ENCODE measurements at regions of chr1 and their contacts with region 1.

Region 1: GRCh38 chr1:33055210-33056008 is 18.7 kb upstream of the AK2 start:
- DNase-seq: peak; percentile 60 to 85
- H3K4me3 ChIP-seq: no peak overlapping the region; the same call in 1 of the 2 replicates
- H3K27ac ChIP-seq: peak overlapping the region; percentile 60
- H3K4me1 ChIP-seq: peaks cover 29% of the 10 kb centered on the region
- H3K27me3 ChIP-seq: no peaks in the 10 kb centered on the region
- CTCF ChIP-seq: peak; percentile 85

Region 2: DNA sequence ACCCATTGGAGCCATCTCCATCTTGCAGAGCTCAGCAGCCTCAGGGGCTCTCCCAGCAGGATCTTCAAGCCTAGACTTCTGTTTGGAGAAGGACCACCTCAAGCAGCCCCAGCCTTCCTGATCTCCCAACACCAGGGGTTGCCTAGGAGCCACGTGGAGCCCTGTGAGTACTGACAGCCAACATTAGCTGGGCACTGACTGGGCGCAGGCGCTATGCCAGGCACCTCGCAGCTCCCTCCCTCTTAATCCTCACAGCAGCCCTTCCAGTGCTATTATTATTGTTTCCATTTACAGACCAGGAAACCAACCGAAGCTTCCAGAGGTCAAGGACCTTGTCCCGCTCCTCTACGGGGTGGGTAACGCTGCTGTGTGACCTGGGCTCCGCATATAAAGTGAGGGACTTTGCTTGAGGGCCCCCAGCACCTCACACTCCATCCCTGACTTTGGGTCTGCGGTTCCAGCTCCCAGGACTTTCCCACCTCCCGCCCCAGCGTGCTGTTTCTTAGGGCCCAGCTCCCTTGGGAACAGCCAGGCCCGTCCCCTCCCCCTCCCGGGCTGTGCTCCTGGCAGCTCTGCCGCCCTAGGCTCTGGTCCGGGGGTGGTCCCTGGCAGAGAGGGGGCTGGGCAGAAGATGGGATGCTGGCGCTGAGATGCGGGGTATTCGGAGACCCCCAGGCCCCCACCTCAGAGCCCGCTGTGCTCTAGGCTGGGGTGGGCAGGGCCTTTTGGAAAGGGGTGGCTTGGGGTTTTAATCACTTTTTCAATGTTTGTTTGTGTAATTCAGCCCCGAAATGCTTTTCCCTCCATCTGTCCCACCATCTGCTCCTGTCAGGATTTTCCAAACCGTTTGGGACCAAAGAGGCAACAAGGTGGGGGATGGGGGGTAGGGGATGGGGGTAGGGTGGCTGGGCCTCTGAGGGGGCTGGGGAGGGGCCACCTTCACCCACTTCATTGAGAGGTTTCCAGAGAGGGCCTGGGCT is 173.2 kb before region 1 on chr1:
- CTCF ChIA-PET with region 1: interaction called, 3 read pairs
- POLR2A ChIA-PET with region 1: no interaction called
- intact Hi-C with region 1: loop called (anchors 1 kb)
- DNase-seq: no peak
- H3K4me3 ChIP-seq: no peak overlapping the region
- H3K27ac ChIP-seq: no peak overlapping the region
- H3K4me1 ChIP-seq: no peaks in the 10 kb centered on the region
- H3K27me3 ChIP-seq: peaks cover 6% of the 10 kb centered on the region; the same call in 1 of the 2 replicates
- CTCF ChIP-seq: no peak

Region 3: DNA sequence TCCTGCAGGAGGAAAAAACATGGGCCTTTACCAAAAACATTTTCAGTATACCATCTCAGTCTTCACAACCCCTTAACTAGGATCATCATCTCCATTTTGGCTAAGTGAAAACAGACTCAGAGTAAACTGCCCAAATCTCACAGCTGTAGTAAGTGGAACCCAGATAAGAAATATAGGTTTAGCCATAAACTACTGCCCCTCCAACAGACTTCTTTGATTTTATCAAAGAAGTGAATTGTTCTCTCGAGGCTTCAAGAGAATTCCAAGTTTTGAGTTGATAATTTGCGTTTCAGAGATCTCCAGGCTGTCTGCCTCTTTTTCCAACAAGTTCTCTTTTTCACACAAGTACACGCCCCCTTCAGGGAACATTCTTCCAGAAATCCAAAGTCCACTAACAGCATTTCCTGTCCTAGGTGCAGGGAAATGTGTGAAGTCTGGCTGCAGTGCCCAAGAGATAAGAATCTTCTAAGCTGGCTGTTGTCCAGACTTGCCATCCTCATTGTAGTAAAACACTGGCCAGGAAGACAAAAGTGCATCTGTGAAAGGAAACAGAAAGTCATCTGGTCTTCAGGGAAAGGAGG is 121.6 kb before region 1 on chr1:
- CTCF ChIA-PET with region 1: interaction called, 7 read pairs
- POLR2A ChIA-PET with region 1: no interaction called
- intact Hi-C with region 1: loop called (anchors 1 kb)
- DNase-seq: peak; percentile 42 to 52
- H3K4me3 ChIP-seq: no peak overlapping the region
- H3K27ac ChIP-seq: peak overlapping the region; percentile 31
- H3K4me1 ChIP-seq: peaks cover 18% of the 10 kb centered on the region
- H3K27me3 ChIP-seq: no peaks in the 10 kb centered on the region
- CTCF ChIP-seq: peak; percentile 44; the same call in 1 of the 2 replicates

Region 4: DNA sequence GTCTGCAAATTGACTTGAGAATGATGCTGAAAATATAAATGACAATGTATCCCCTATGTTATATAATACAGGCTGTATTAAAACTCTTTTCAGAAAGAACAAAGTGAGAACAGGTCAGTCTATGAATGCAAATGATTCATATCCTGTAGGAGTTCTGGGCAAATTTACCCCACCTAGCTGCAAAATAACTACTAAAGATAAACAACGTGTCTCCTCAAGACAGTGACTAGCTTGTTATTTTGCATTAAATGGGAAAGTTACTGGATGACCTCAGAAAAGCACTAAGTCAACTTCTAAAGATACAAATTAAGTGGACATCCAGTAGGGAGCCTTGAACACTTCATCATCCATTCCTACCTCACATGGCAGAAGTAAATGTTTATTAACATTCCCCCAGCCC is 101.9 kb before region 1 on chr1:
- CTCF ChIA-PET with region 1: interaction called, 15 read pairs
- POLR2A ChIA-PET with region 1: no interaction called
- intact Hi-C with region 1: no loop called
- DNase-seq: peak in 1 of 2 experiments; percentile 79
- H3K4me3 ChIP-seq: no peak overlapping the region
- H3K27ac ChIP-seq: peak overlapping the region; percentile 88
- H3K4me1 ChIP-seq: peaks cover 28% of the 10 kb centered on the region
- H3K27me3 ChIP-seq: no peaks in the 10 kb centered on the region
- CTCF ChIP-seq: no peak

Region 5: GRCh38 chr1:33074193-33074945 is 19.0 kb after region 1 on chr1:
- CTCF ChIA-PET with region 1: interaction called, 10 read pairs
- POLR2A ChIA-PET with region 1: interaction called, 5 read pairs
- intact Hi-C with region 1: no loop called
- DNase-seq: no peak
- H3K4me3 ChIP-seq: no peak overlapping the region
- H3K27ac ChIP-seq: no peak overlapping the region
- H3K4me1 ChIP-seq: no peaks in the 10 kb centered on the region
- H3K27me3 ChIP-seq: no peaks in the 10 kb centered on the region
- CTCF ChIP-seq: no peak